IMR-90 (cell line): ENCODE measurements at regions of chr14 and their contacts with region 1.

Region 1: GRCh38 chr14:52313903-52314594 is at the start of gene PTGER2:
- DNase-seq: peak; percentile 97
- ATAC-seq: peak; percentile 88
- H3K4me3 ChIP-seq: peak within 1 kb of the TSS; percentile 90
- H3K27ac ChIP-seq: peak within 1 kb of the TSS; percentile 98
- H3K4me1 ChIP-seq: peaks cover 10% of the 10 kb centered on the region
- H3K27me3 ChIP-seq: no peaks in the 10 kb centered on the region
- CTCF ChIP-seq: no peak
- POLR2A ChIP-seq: peak; percentile 80
- RAD21 ChIP-seq: no peak; the same call in 1 of the 2 replicates
- total RNA-seq, gene PTGER2: 24.7 and 33.6 TPM in 2 replicates

Region 2: DNA sequence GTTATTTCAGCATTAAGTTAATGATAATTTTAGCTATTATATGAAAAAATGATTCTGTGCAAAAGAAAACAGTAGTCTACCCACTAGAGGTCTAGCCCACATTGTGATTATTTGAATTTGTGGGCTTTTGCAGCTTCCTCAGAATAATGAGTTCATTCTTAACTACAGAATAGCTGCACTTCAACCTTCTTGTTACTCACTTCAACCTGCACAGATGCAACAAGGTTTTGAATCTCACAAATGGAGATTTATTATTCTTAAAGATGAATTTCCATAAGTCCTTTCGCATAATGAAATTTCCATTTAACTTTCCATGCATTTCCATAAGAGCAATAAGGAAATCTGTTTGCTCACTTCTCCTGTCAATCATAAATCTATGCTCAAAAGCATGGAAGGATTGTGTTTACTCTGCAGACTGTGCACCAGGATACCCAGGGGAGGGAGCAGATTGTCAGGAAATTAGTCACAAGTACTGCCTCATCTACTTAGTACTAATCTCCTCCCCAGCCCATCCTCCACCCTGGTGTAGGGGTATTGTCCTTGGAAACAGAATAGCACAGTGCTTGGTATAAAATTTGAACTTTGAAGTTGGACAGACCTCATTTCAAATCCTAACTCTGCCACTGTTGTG is 24.1 kb after region 1 on chr14:
- CTCF ChIA-PET with region 1: no interaction called
- POLR2A ChIA-PET with region 1: no interaction called
- dilution Hi-C with region 1: no loop called
- in situ Hi-C with region 1: no loop called
- intact Hi-C with region 1: no loop called
- DNase-seq: peak; percentile 70
- ATAC-seq: peak; percentile 84
- H3K4me3 ChIP-seq: no peak overlapping the region
- H3K27ac ChIP-seq: no peak overlapping the region
- H3K4me1 ChIP-seq: peaks cover 16% of the 10 kb centered on the region
- H3K27me3 ChIP-seq: no peaks in the 10 kb centered on the region
- CTCF ChIP-seq: no peak
- POLR2A ChIP-seq: no peak
- RAD21 ChIP-seq: no peak

Region 3: GRCh38 chr14:52352061-52352491 is 38.0 kb after region 1 on chr14:
- CTCF ChIA-PET with region 1: interaction called, 3 read pairs
- POLR2A ChIA-PET with region 1: no interaction called
- dilution Hi-C with region 1: no loop called
- in situ Hi-C with region 1: no loop called
- intact Hi-C with region 1: loop called (anchors 1 kb)
- DNase-seq: no peak
- ATAC-seq: no peak
- H3K4me3 ChIP-seq: no peak overlapping the region
- H3K27ac ChIP-seq: peak overlapping the region; percentile 72; the same call in 1 of the 2 replicates
- H3K4me1 ChIP-seq: peaks cover 28% of the 10 kb centered on the region
- H3K27me3 ChIP-seq: no peaks in the 10 kb centered on the region
- CTCF ChIP-seq: no peak
- POLR2A ChIP-seq: no peak
- RAD21 ChIP-seq: no peak

Region 4: DNA sequence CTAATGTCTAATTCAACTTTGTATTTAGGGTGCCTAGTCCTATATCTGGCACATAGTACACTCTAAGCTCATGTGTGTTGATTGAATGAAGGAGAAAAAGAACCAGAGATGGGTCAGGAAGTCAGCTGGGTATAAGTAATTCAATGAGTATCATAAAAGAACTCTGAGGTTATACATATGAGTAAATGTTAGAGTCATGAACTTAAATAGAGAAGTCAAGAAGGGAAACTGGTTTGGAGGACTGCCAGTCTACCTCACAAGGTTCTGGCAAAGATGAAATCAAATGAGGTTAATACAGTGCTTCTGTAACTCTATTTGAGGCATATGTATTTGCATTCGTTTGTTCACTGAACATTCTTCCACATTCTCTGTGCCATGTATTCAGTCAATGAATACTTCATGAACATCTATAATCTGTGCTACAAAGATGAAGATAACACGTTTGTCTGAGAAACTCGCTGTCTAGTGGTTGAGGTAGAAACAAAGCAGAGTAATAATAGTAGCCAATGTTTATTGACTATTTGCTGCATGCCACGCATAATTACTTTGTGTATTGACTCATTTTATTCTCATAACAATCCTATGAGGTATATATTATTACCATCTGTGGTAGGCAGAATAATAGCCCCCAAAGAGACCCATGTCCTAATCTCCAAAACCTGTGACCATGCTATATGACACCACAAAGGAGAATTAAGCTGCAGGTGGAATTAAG is 88.9 kb after region 1 on chr14:
- CTCF ChIA-PET with region 1: interaction called, 3 read pairs
- POLR2A ChIA-PET with region 1: no interaction called
- dilution Hi-C with region 1: no loop called
- in situ Hi-C with region 1: no loop called
- intact Hi-C with region 1: loop called (anchors 5 kb)
- DNase-seq: peak; percentile 72
- ATAC-seq: no peak
- H3K4me3 ChIP-seq: no peak overlapping the region
- H3K27ac ChIP-seq: no peak overlapping the region
- H3K4me1 ChIP-seq: peaks cover 22% of the 10 kb centered on the region
- H3K27me3 ChIP-seq: no peaks in the 10 kb centered on the region
- CTCF ChIP-seq: no peak
- POLR2A ChIP-seq: no peak
- RAD21 ChIP-seq: no peak

Region 5: DNA sequence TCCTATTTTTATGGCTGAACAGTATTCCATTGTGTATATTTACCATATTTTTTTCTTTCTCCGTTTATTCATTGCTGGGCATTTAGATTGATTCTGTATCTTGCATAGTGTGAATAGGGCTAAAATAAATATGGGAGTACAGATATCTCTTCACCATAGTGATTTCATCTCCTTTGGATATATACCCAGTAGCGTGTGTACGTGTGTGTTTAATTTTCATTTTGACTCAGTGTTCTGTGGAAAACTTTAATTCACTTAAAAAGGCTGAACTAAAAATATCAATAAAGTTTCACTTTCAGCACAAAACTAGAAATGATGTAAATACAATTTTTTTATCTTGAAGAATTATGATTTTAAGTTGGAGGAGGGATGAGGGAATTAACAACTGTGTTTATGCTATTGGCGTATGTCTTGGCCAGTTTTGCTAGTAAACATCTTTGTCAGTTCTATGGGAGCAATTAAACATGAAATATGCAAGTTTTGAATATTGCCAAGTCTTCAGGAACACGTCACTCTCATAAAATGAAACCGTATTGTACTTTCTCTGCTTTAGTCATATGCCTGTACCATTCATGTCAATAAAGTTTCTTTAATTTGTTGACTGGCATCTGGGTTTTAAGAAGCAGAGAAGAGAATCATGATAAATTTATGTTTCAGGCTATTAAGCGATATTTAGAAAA is 99.8 kb after region 1 on chr14:
- CTCF ChIA-PET with region 1: no interaction called
- POLR2A ChIA-PET with region 1: no interaction called
- dilution Hi-C with region 1: no loop called
- in situ Hi-C with region 1: no loop called
- intact Hi-C with region 1: loop called (anchors 5 kb)
- DNase-seq: peak; percentile 65
- ATAC-seq: peak; percentile 72
- H3K4me3 ChIP-seq: peak overlapping the region; percentile 32; the same call in 1 of the 2 replicates
- H3K27ac ChIP-seq: no peak overlapping the region
- H3K4me1 ChIP-seq: peaks cover 5% of the 10 kb centered on the region
- H3K27me3 ChIP-seq: no peaks in the 10 kb centered on the region
- CTCF ChIP-seq: no peak
- POLR2A ChIP-seq: no peak
- RAD21 ChIP-seq: no peak

Region 6: GRCh38 chr14:52455291-52456088 is 141.4 kb after region 1 on chr14:
- CTCF ChIA-PET with region 1: no interaction called
- POLR2A ChIA-PET with region 1: interaction called, 6 read pairs
- dilution Hi-C with region 1: no loop called
- in situ Hi-C with region 1: no loop called
- intact Hi-C with region 1: loop called (anchors 2 kb)
- DNase-seq: peak; percentile 87
- ATAC-seq: peak; percentile 56
- H3K4me3 ChIP-seq: no peak overlapping the region
- H3K27ac ChIP-seq: peak overlapping the region; percentile 67; the same call in 1 of the 2 replicates
- H3K4me1 ChIP-seq: peaks cover 10% of the 10 kb centered on the region
- H3K27me3 ChIP-seq: no peaks in the 10 kb centered on the region
- CTCF ChIP-seq: no peak
- POLR2A ChIP-seq: no peak
- RAD21 ChIP-seq: no peak

Region 7: GRCh38 chr14:52552063-52552988 is 238.3 kb after region 1 on chr14 and contains the starts of genes GPR137C and TXNDC16:
- CTCF ChIA-PET with region 1: no interaction called
- POLR2A ChIA-PET with region 1: interaction called, 13 read pairs
- dilution Hi-C with region 1: no loop called
- in situ Hi-C with region 1: no loop called
- intact Hi-C with region 1: loop called (anchors 5 kb)
- DNase-seq: peak; percentile 99
- ATAC-seq: peak; percentile 99
- H3K4me3 ChIP-seq: peak within 1 kb of the TSS; percentile 58
- H3K27ac ChIP-seq: no peak within 1 kb of the TSS; the same call in 1 of the 2 replicates
- H3K4me1 ChIP-seq: no peaks in the 10 kb centered on the region
- H3K27me3 ChIP-seq: no peaks in the 10 kb centered on the region
- CTCF ChIP-seq: no peak
- POLR2A ChIP-seq: peak; percentile 32; the same call in 1 of the 2 replicates
- RAD21 ChIP-seq: no peak
- total RNA-seq, gene GPR137C: 0.72 and 1.4 TPM in 2 replicates
- total RNA-seq, gene TXNDC16: 1.4 and 1.9 TPM in 2 replicates

Region 8: DNA sequence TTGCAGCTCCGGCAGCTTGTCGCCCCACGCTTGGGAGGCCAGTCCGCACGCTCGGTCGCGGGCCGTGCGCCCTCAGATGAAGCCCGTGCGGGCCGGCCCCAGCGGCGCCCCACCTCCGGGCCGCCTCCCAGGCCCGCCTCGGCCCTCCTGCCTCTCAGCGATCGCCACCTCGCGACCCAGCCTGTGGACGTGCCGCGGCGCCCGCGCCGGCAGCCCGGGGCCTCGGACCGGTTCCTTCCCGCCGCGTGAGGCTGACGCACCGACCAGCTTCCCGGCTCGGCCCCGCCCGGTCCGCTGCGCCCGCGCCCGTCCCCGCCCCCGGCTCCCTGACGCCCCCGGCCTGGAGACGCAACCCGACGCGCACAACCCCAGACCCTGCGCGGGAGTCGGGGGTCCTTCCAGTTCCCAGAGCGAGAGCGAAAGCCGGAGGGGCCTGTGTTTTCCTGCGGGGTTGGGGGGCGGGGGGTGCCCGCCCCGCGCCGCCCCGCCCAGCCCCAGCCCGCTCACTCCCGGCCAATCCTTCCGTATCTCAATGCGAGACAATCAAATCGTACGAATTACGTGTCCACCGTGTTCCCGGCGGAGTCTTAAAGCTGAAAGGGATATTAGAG is 381.5 kb after region 1 on chr14 and contains the start of gene ERO1A:
- CTCF ChIA-PET with region 1: no interaction called
- POLR2A ChIA-PET with region 1: no interaction called
- dilution Hi-C with region 1: no loop called
- in situ Hi-C with region 1: loop called (anchors 25 kb)
- intact Hi-C with region 1: loop called (anchors 5 kb)
- DNase-seq: peak; percentile 83
- ATAC-seq: peak; percentile 91
- H3K4me3 ChIP-seq: peak within 1 kb of the TSS; percentile 74
- H3K27ac ChIP-seq: peak within 1 kb of the TSS; percentile 96
- H3K4me1 ChIP-seq: peaks cover 2% of the 10 kb centered on the region
- H3K27me3 ChIP-seq: no peaks in the 10 kb centered on the region
- CTCF ChIP-seq: peak; percentile 21; the same call in 1 of the 2 replicates
- POLR2A ChIP-seq: peak; percentile 78
- RAD21 ChIP-seq: no peak
- total RNA-seq, gene ERO1A: 38.0 and 44.6 TPM in 2 replicates